Activated CD4-positive, alpha-beta T cell treated with anti-CD3 and anti-CD28 coated beads, Interleukin-2, amount 10 ng/mL, durations not matched to agents 7 days and 5 days (primary cell): ENCODE measurements at regions of chr1 and their contacts with region 1.

Region 1: DNA sequence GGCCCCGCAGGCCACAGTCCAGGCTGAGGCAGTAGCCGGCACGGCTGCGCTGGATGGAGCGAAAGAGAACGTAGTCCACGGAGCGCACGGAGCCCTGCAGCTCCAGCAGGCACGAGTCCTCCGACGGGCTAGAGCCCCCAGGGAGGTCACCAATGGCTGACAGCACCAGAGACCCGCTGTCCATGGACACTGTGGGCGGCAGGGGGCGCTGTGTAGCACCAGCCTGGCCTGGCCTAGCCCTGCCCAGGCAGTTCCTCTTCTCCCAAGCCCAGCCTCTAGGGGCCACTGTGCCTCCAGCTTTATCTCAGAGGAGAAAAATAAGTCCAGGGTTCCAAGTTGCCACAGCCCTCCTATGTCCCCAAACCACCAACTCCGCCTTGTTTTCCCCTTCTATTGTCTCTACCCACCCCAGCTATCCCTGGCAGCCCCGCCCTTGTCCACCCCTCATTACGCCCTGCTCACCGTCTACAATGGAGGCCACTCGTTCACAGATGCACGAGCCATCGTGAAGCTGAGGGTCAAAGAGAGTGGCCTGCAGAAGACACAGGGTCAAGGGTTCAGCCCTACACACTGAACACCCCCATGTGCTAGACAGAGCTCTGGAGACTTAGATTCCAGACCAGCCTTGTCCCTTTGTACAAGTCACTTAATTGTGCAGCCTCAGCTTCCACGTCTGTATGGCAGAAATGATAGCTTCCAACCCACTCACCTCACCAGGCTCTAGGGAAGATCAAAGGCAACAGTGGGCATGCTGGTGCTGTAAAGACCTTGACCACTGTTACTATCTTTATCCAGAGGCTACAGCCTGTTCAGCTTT is 4.4 kb downstream of the ENTREP3 start:
- DNase-seq: peak; percentile 97
- H3K4me3 Mint-ChIP-seq: peak overlapping the region; percentile 64
- H3K27ac Mint-ChIP-seq: peak overlapping the region; percentile 74
- H3K4me1 Mint-ChIP-seq: peaks cover 44% of the 10 kb centered on the region
- H3K27me3 Mint-ChIP-seq: no peaks in the 10 kb centered on the region

Region 2: GRCh38 chr1:155063550-155064110 is 187.2 kb before region 1 on chr1 and contains the start of gene EFNA4:
- CTCF ChIA-PET with region 1: no interaction called
- POLR2A ChIA-PET with region 1: no interaction called
- DNase-seq: peak; percentile 91
- H3K4me3 Mint-ChIP-seq: peak within 1 kb of the TSS; percentile 91
- H3K27ac Mint-ChIP-seq: peak within 1 kb of the TSS; percentile 68
- H3K4me1 Mint-ChIP-seq: peaks cover 36% of the 10 kb centered on the region
- H3K27me3 Mint-ChIP-seq: no peaks in the 10 kb centered on the region
- total RNA-seq, gene EFNA4: 8.2 to 8.3 TPM

Region 3: GRCh38 chr1:155227261-155228095 is 23.4 kb before region 1 on chr1:
- CTCF ChIA-PET with region 1: interaction called, 11 read pairs
- POLR2A ChIA-PET with region 1: no interaction called
- DNase-seq: peak; percentile 99
- H3K4me3 Mint-ChIP-seq: peak overlapping the region; percentile 84
- H3K27ac Mint-ChIP-seq: peak overlapping the region; percentile 92
- H3K4me1 Mint-ChIP-seq: peaks cover 36% of the 10 kb centered on the region
- H3K27me3 Mint-ChIP-seq: no peaks in the 10 kb centered on the region

Region 4: DNA sequence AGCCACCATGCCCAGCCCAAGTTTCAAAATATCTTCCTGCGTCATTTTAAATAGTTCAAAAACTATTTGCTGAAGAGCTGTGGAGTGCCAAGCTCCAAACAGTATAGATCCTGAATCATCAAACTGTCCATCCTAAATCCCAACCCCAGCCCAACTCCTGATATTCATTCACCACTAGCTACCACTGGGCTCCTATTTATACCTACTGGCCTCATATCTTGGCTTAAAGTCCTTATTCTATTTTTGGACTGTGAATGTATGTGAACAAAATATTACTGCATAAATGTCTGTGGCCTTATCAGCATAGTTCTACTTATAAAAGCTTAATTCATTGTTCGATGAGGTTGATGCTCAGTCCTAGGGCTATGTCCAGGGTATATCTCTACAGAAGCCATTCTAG is 16.5 kb after region 1 on chr1:
- CTCF ChIA-PET with region 1: interaction called, 72 read pairs
- POLR2A ChIA-PET with region 1: interaction called, 3 read pairs
- DNase-seq: no peak
- H3K4me3 Mint-ChIP-seq: no peak overlapping the region
- H3K27ac Mint-ChIP-seq: no peak overlapping the region
- H3K4me1 Mint-ChIP-seq: peaks cover 28% of the 10 kb centered on the region
- H3K27me3 Mint-ChIP-seq: no peaks in the 10 kb centered on the region

Region 5: GRCh38 chr1:155308493-155309422 is 57.9 kb after region 1 on chr1 and contains the start of gene FDPS:
- CTCF ChIA-PET with region 1: interaction called, 17 read pairs
- POLR2A ChIA-PET with region 1: no interaction called
- DNase-seq: peak; percentile 99
- H3K4me3 Mint-ChIP-seq: peak within 1 kb of the TSS; percentile 97
- H3K27ac Mint-ChIP-seq: peak within 1 kb of the TSS; percentile 97
- H3K4me1 Mint-ChIP-seq: peaks cover 44% of the 10 kb centered on the region
- H3K27me3 Mint-ChIP-seq: no peaks in the 10 kb centered on the region
- total RNA-seq, gene FDPS: 209 to 229 TPM